ENCODE measurements at regions of chr10 and their contacts with region 1.

Region 1: GRCh38 chr10:101467286-101467770 is 113.4 kb downstream of the BTRC start:
- DNase-seq: peak; percentile 4 to 79
- H3K4me3 ChIP-seq: no peak overlapping the region
- H3K27ac ChIP-seq: no peak overlapping the region
- H3K4me1 ChIP-seq: no peaks in the 10 kb centered on the region
- H3K27me3 ChIP-seq: no peaks in the 10 kb centered on the region
- CTCF ChIP-seq: peak; percentile 72

Region 2: GRCh38 chr10:101291331-101292193 is 175.8 kb before region 1 on chr10:
- CTCF ChIA-PET with region 1: interaction called, 22 read pairs
- POLR2A ChIA-PET with region 1: no interaction called
- intact Hi-C with region 1: no loop called
- DNase-seq: no peak
- H3K4me3 ChIP-seq: no peak overlapping the region
- H3K27ac ChIP-seq: no peak overlapping the region
- H3K4me1 ChIP-seq: no peaks in the 10 kb centered on the region
- H3K27me3 ChIP-seq: peaks cover 17% of the 10 kb centered on the region
- CTCF ChIP-seq: peak; percentile 44; the same call in 1 of the 2 replicates

Region 3: DNA sequence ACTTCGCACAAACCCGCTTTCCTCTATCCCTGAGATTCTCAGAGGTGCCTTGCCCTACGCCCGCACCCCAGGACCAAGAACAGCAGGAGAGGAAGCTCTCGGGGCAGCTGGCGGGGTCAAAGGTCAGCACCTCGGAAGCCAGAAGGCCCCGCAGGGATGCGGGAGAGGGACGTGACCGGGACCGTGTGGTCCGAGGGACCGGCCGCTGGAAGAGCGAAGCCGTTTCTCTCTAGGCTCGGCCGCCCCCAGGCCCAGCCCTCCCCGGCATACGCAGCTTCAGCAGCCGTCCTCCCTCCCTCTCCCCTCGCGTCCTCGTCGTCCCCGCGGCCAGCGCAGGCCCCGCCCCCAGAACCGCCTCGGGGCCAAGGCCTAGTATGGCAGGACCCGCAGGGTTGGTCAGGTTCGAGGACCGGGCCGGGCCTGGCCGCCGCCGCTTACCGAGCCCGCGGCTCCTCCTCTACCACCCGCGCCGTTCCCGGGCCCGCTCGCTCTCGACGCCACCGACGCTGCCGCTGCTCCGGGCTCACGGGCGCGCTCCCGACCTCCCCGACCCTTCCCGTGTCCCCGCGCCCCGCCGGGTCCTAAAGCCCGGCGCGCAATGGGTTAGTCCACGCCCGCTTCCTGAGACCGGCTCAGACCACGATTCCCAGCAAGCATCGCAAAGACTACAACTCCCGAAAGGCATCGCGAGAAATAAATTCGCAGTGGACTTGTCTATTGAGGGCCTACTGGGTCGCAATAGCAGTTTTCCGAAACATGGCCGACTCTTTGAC is 588.5 kb after region 1 on chr10 and contains the start of gene ARMH3:
- CTCF ChIA-PET with region 1: no interaction called
- POLR2A ChIA-PET with region 1: interaction called, 12 read pairs
- intact Hi-C with region 1: no loop called
- DNase-seq: peak; percentile 86 to 87
- H3K4me3 ChIP-seq: peak within 1 kb of the TSS; percentile 84
- H3K27ac ChIP-seq: 0 out of 2 replicates have a peak within 1 kb of the TSS, but pooled peaks have one; percentile 19
- H3K4me1 ChIP-seq: 0 out of 2 replicates have a peak, but pooled peaks cover 7% of the 10 kb centered on the region
- H3K27me3 ChIP-seq: no peaks in the 10 kb centered on the region
- CTCF ChIP-seq: no peak
- total RNA-seq, gene ARMH3: 12.0 and 12.8 TPM in 2 replicates